ENCODE measurements at regions of chr4 and their contacts with region 1.

Region 1: GRCh38 chr4:88765729-88766128 is 68.1 kb upstream of the NAP1L5 start:
- DNase-seq: peak; percentile 33 to 58
- ATAC-seq: peak; percentile 92 to 100 (median 98)
- H3K4me3 ChIP-seq: no peak overlapping the region
- H3K27ac ChIP-seq: peak overlapping the region in 6 of 10 donors; percentile 29 to 67 (median 34)
- H3K4me1 ChIP-seq: peaks cover 0 to 17% (median 5%) of the 10 kb centered on the region in 9 donors
- H3K27me3 ChIP-seq: no peaks in the 10 kb centered on the region
- CTCF ChIP-seq: no peak

Region 2: GRCh38 chr4:88720451-88721428 is 45.0 kb before region 1 on chr4:
- intact Hi-C with region 1: loop called in 1 of 10 experiments (anchors 5 kb)
- DNase-seq: no peak
- ATAC-seq: peak in 4 of 8 donors; percentile 10 to 36 (median 20)
- H3K4me3 ChIP-seq: no peak overlapping the region
- H3K27ac ChIP-seq: peak overlapping the region in 4 of 10 donors; percentile 0 to 57 (median 14)
- H3K4me1 ChIP-seq: peaks cover 5 to 52% (median 36%) of the 10 kb centered on the region in 9 donors
- H3K27me3 ChIP-seq: no peaks in the 10 kb centered on the region
- CTCF ChIP-seq: no peak

Measured in heart right ventricle (tissue), 16 donors.